ENCODE measurements at regions of chr12 and their contacts with region 1.

Region 1: DNA sequence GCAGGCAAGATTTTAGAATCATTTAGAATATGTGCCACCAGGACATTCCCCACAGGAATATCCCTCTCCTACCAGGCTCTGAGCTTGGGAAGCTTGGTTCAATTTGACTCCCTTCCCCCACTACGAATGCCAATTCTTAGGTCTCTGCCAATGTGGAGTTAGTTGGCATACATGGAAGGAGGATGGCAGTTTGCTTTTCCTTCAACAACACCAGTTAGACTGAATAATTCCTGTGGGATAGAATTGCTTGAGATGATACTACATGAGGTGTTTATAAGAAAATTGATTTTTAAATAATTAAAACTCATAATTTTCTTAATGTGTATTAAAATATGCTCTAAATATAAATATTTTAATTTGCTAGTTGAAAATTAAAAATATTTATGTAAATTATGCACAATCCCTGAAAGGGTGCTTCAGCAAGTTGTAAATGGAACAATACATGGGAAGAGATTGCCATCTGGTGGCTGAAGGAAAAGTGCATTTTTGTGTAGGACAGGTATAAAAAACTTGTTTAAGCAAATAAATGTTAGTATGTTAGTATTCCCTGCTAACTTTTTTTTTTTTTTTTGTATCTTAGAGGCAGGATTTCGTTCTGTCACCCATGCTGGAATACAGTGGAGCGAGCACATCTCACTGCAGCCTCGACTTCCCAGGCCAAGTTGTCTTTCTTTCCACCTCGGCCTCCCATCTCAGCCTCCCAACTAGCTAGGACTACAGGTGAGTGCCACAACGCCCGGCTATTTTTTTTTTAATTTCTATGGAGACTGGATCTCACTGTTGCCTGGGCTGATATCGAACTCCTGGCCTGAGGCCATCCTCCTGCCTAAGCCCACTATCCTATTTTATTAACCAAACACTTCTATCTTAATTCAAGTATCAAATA is 25.8 kb upstream of the STRAP start:
- DNase-seq: peak in 3 of 5 donors; percentile 46 to 83 (median 75)
- H3K4me3 ChIP-seq: no peak overlapping the region
- H3K27ac ChIP-seq: no peak overlapping the region
- H3K4me1 ChIP-seq: no peaks in the 10 kb centered on the region
- H3K27me3 ChIP-seq: no peaks in the 10 kb centered on the region
- CTCF ChIP-seq: peak; percentile 70

Region 2: DNA sequence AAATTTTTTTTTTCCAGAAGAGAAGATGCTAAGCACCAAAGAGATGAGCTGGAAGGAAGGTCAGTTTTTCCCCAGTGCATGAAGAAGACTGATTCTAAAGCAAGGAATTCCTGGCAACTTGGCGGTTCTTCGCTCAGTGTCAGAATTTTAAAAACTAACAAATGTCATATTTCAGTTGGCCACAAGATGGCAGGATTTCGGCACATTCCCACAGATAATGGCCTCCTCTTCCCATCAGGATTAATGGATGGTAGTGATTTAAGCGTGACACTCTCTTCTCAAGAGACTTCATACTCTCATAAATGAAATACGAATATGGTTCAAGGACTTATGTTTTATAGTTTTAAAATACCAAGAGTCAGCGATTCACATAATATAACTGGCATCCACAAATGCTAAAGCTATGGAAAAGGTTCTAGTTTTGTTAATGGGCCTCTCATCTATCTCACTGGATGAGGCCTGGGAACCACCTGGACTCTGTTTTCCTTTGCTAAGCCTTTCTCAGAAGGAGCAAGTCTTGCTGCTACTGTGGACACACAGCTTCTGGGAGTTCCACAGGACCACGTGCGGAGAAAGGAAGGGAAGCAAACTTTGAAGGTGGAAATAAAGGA is 580.1 kb before region 1 on chr12:
- intact Hi-C with region 1: loop called (anchors 10 kb)
- DNase-seq: peak in 2 of 5 donors; percentile 62 to 73
- H3K4me3 ChIP-seq: no peak overlapping the region
- H3K27ac ChIP-seq: no peak overlapping the region
- H3K4me1 ChIP-seq: peaks cover 0 to 2% (median 2%) of the 10 kb centered on the region in 3 donors
- H3K27me3 ChIP-seq: no peaks in the 10 kb centered on the region
- CTCF ChIP-seq: peak; percentile 79

Region 3: DNA sequence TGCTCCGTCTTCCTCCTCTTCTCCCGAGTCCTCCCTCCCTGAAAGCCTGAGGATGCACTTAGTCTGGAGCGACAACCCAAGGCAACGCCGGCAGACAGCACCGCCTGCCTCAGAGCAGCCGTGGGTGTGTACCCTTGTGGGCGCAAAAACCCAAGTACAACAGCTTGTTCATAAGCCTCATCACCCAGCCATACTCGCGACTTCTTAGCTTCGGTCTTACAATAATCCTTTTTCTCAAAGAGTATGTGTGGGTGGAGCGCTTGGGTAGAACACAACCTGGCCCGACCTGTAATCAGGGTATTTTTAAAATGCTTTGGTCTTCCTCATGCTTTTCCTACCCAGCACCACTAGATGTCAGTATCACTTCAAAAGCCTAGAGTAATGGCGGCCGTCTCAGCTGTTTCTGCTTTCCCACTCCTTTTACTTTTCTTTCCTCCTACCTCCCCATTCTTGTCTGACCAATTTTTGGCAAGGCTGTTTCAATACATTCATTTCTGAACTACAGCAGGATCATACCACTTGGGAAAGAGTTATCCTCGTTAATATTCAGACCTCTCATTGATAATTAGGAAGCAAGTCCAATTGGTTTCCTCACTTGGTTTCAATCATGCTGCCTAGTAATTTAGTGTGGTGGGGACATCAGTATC is 266.0 kb before region 1 on chr12:
- intact Hi-C with region 1: loop called (anchors 5 kb)
- DNase-seq: peak in 4 of 5 donors; percentile 50 to 92 (median 74)
- H3K4me3 ChIP-seq: peak overlapping the region; percentile 48 to 68 (median 61)
- H3K27ac ChIP-seq: peak overlapping the region in 1 of 2 donors; percentile 10
- H3K4me1 ChIP-seq: peaks cover 0 to 2% (median 0%) of the 10 kb centered on the region in 3 donors
- H3K27me3 ChIP-seq: no peaks in the 10 kb centered on the region
- CTCF ChIP-seq: peak; percentile 90

Region 4: GRCh38 chr12:15712823-15713660 is 143.3 kb before region 1 on chr12:
- intact Hi-C with region 1: no loop called
- DNase-seq: no peak
- H3K4me3 ChIP-seq: peak overlapping the region in 1 of 3 donors; percentile 30
- H3K27ac ChIP-seq: peak overlapping the region in 1 of 2 donors; percentile 25
- H3K4me1 ChIP-seq: peaks cover 0 to 17% (median 6%) of the 10 kb centered on the region in 3 donors
- H3K27me3 ChIP-seq: no peaks in the 10 kb centered on the region
- CTCF ChIP-seq: no peak